K562 (cell line): ENCODE measurements at regions of chr19 and their contacts with region 1.

Region 1: GRCh38 chr19:2739602-2740313 is at the start of gene SLC39A3:
- DNase-seq: peak; percentile 98 to 100 (median 100)
- ATAC-seq: peak; percentile 99
- H3K4me3 ChIP-seq: peak within 1 kb of the TSS; percentile 99
- H3K27ac ChIP-seq: peak within 1 kb of the TSS; percentile 99
- H3K4me1 ChIP-seq: peaks cover 5 to 20% of the 10 kb centered on the region in 2 experiments; a peak in 3 of 5 replicates
- H3K27me3 ChIP-seq: peaks cover 11 to 19% of the 10 kb centered on the region in 2 experiments; a peak in 4 of 5 replicates
- CTCF ChIP-seq: no peak
- EP300 ChIP-seq: peak; percentile 35; the same call in 1 of the 2 replicates
- POLR2A ChIP-seq: no peak; the same call in 1 of the 2 replicates
- RAD21 ChIP-seq: no peak
- polyA plus RNA-seq, gene SLC39A3: 2.3 to 3.6 TPM

Region 2: GRCh38 chr19:2529473-2529918 is 210.3 kb before region 1 on chr19:
- CTCF ChIA-PET with region 1: no interaction called
- POLR2A ChIA-PET with region 1: no interaction called
- in situ Hi-C with region 1: no loop called
- intact Hi-C with region 1: no loop called
- DNase-seq: peak in 1 of 4 experiments; percentile 46
- ATAC-seq: peak; percentile 88
- H3K4me3 ChIP-seq: no peak overlapping the region
- H3K27ac ChIP-seq: no peak overlapping the region; the same call in 2 of the 3 replicates
- H3K4me1 ChIP-seq: peaks cover 5 to 24% of the 10 kb centered on the region in 2 experiments
- H3K27me3 ChIP-seq: no peaks in the 10 kb centered on the region; a peak in 1 of 5 replicates
- CTCF ChIP-seq: no peak
- EP300 ChIP-seq: peak; percentile 86
- POLR2A ChIP-seq: no peak
- RAD21 ChIP-seq: peak in 1 of 2 experiments; percentile 24; a peak in 1 of 4 replicates

Region 3: DNA sequence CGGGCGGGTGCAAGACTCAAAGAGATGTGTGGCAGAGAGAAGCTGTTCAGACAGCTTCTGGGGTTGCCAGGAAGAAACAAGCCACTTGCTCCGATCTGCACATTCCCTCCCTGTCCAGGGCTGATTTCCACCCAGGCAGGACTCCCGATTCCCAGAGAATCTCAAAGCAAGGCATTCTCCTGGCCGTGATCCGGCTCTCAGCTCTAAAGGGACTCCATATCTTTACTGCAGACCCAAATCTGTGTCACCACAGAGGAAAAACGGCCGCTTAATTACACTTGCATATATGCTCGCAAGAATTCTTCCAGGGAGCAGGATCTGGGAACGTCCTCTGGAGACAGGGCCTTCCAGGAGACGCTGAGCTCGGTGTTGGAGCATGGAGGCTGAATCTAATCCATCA is 62.9 kb before region 1 on chr19:
- CTCF ChIA-PET with region 1: no interaction called
- POLR2A ChIA-PET with region 1: no interaction called
- in situ Hi-C with region 1: no loop called
- intact Hi-C with region 1: no loop called
- DNase-seq: no peak
- ATAC-seq: no peak
- H3K4me3 ChIP-seq: no peak overlapping the region
- H3K27ac ChIP-seq: no peak overlapping the region
- H3K4me1 ChIP-seq: no peaks in the 10 kb centered on the region; a peak in 2 of 5 replicates
- H3K27me3 ChIP-seq: peaks cover 34 to 68% of the 10 kb centered on the region in 2 experiments
- CTCF ChIP-seq: no peak
- EP300 ChIP-seq: no peak
- POLR2A ChIP-seq: no peak
- RAD21 ChIP-seq: no peak

Region 4: DNA sequence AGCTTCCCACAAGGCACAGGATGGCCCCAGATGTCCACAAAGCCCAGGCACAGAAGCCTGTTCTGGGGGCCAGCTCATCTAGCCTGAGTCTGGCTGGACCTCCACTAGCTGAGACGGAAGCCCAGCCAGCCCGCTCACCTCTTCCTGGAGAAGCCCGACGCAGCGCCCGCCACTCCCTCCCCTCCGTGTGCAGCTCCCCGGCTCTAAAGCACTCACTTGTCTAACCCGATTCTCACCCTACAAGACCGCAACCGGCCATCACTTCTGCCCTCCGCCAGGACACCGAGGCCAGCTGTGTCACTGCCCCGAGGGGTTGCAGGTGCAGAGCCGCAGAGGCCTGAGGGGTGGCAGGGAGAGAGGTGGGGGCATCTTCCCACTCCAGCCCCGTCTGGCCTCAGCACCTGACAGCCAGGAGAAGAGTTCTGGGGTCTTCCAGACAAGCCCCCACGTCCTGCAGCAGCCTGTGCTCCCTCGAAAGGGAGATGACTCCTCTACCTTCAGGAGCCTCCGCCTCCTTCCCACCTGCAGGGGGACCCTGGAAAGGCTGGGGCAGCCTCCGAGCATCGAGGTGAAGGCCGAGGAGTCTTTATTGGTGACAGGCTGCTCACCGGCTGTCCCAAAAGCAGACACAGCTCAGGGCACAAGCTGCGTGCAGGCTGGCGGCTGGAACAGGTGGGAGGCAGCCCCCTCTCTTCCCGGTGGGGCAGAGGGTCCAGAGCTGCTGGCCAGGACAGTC is 12.7 kb before region 1 on chr19:
- CTCF ChIA-PET with region 1: no interaction called
- POLR2A ChIA-PET with region 1: interaction called, 21 read pairs
- in situ Hi-C with region 1: no loop called
- intact Hi-C with region 1: no loop called
- DNase-seq: no peak
- ATAC-seq: peak; percentile 9; the same call in 2 of the 3 replicates
- H3K4me3 ChIP-seq: no peak overlapping the region
- H3K27ac ChIP-seq: no peak overlapping the region
- H3K4me1 ChIP-seq: peaks cover 17 to 67% of the 10 kb centered on the region in 2 experiments
- H3K27me3 ChIP-seq: peaks cover 2 to 10% of the 10 kb centered on the region in 2 experiments; a peak in 2 of 5 replicates
- CTCF ChIP-seq: no peak
- EP300 ChIP-seq: no peak
- POLR2A ChIP-seq: no peak
- RAD21 ChIP-seq: no peak

Region 5: GRCh38 chr19:2782936-2783780 is 43.4 kb after region 1 on chr19 and contains the start of gene SGTA:
- CTCF ChIA-PET with region 1: no interaction called
- POLR2A ChIA-PET with region 1: no interaction called
- in situ Hi-C with region 1: no loop called
- intact Hi-C with region 1: loop called (anchors 1 kb)
- DNase-seq: peak; percentile 90 to 99 (median 94)
- ATAC-seq: peak; percentile 87
- H3K4me3 ChIP-seq: peak within 1 kb of the TSS; percentile 95
- H3K27ac ChIP-seq: peak within 1 kb of the TSS; percentile 93
- H3K4me1 ChIP-seq: peaks cover 13 to 51% of the 10 kb centered on the region in 2 experiments; a peak in 4 of 5 replicates
- H3K27me3 ChIP-seq: no peaks in the 10 kb centered on the region
- CTCF ChIP-seq: peak; percentile 57 to 60 (median 60)
- EP300 ChIP-seq: peak; percentile 45; the same call in 1 of the 2 replicates
- POLR2A ChIP-seq: peak; percentile 80
- RAD21 ChIP-seq: no peak
- polyA plus RNA-seq, gene SGTA: 1.4 to 4.8 TPM